GM12878 (cell line): ENCODE measurements at regions of chr3 and their contacts with region 1.

Region 1: GRCh38 chr3:112364291-112364690 is 31.3 kb downstream of the CD200 start:
- DNase-seq: no peak
- ATAC-seq: peak; percentile 79
- H3K4me3 ChIP-seq: peak overlapping the region; percentile 26; the same call in 1 of the 2 replicates
- H3K27ac ChIP-seq: peak overlapping the region; percentile 84
- H3K4me1 ChIP-seq: peaks cover 29% of the 10 kb centered on the region
- H3K27me3 ChIP-seq: no peaks in the 10 kb centered on the region
- CTCF ChIP-seq: no peak
- EP300 ChIP-seq: no peak
- POLR2A ChIP-seq: no peak
- RAD21 ChIP-seq: no peak

Region 2: GRCh38 chr3:112350181-112350825 is 14.0 kb before region 1 on chr3:
- CTCF ChIA-PET with region 1: interaction called, 31 read pairs
- POLR2A ChIA-PET with region 1: interaction called, 12 read pairs
- RAD21 ChIA-PET with region 1: interaction called, 29 read pairs
- SMC1A ChIA-PET with region 1: interaction called, 33 read pairs
- in situ Hi-C with region 1: no loop called
- intact Hi-C with region 1: no loop called
- DNase-seq: no peak
- ATAC-seq: no peak
- H3K4me3 ChIP-seq: no peak overlapping the region
- H3K27ac ChIP-seq: no peak overlapping the region
- H3K4me1 ChIP-seq: peaks cover 9% of the 10 kb centered on the region
- H3K27me3 ChIP-seq: no peaks in the 10 kb centered on the region
- CTCF ChIP-seq: no peak
- EP300 ChIP-seq: no peak
- POLR2A ChIP-seq: no peak
- RAD21 ChIP-seq: no peak

Region 3: GRCh38 chr3:112376996-112377395 is 12.7 kb after region 1 on chr3:
- CTCF ChIA-PET with region 1: interaction called, 10 read pairs
- POLR2A ChIA-PET with region 1: interaction called, 10 read pairs
- RAD21 ChIA-PET with region 1: interaction called, 3 read pairs
- SMC1A ChIA-PET with region 1: interaction called, 9 read pairs
- in situ Hi-C with region 1: no loop called
- intact Hi-C with region 1: no loop called
- DNase-seq: no peak
- ATAC-seq: no peak; the same call in 2 of the 3 replicates
- H3K4me3 ChIP-seq: no peak overlapping the region
- H3K27ac ChIP-seq: no peak overlapping the region
- H3K4me1 ChIP-seq: no peaks in the 10 kb centered on the region
- H3K27me3 ChIP-seq: no peaks in the 10 kb centered on the region
- CTCF ChIP-seq: no peak
- EP300 ChIP-seq: no peak
- POLR2A ChIP-seq: no peak
- RAD21 ChIP-seq: no peak

Region 4: DNA sequence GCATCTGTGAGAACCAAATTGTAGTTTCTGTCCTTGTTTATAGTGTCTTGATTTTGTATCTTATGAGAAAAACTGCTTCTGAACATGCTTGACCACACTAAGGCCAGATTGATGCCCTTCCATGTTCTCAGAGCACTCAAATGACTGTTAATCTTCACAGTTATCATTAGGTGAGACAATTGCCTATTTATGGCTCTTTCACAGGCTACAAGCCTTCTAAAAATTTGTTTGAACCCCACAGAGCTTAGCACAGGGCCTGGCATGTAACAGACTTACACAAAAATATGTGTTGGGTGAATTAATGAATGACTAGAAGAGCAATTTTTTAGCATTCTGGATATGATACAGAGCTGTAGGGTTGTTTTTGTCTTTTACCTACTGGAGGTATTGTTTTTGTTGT is 91.9 kb after region 1 on chr3:
- CTCF ChIA-PET with region 1: no interaction called
- POLR2A ChIA-PET with region 1: no interaction called
- RAD21 ChIA-PET with region 1: interaction called, 8 read pairs
- SMC1A ChIA-PET with region 1: interaction called, 12 read pairs
- in situ Hi-C with region 1: no loop called
- intact Hi-C with region 1: no loop called
- DNase-seq: no peak
- ATAC-seq: peak; percentile 46
- H3K4me3 ChIP-seq: no peak overlapping the region
- H3K27ac ChIP-seq: peak overlapping the region; percentile 61
- H3K4me1 ChIP-seq: peaks cover 17% of the 10 kb centered on the region
- H3K27me3 ChIP-seq: no peaks in the 10 kb centered on the region
- CTCF ChIP-seq: no peak
- EP300 ChIP-seq: peak; percentile 59 to 68; a peak in 1 of 4 replicates
- POLR2A ChIP-seq: no peak
- RAD21 ChIP-seq: peak; percentile 21; the same call in 1 of the 2 replicates